T-cell (primary cell): ENCODE measurements at regions of chr15 and their contacts with region 1.

Region 1: GRCh38 chr15:34209421-34210282 is at the start of gene KATNBL1:
- DNase-seq: peak; percentile 83 to 97 (median 93)
- ATAC-seq: peak; percentile 92 to 97 (median 95)
- H3K4me3 ChIP-seq: peak within 1 kb of the TSS; percentile 63 to 68
- H3K4me3 Mint-ChIP-seq: peak within 1 kb of the TSS; percentile 81 to 90 (median 88)
- H3K27ac ChIP-seq: peak within 1 kb of the TSS; percentile 25
- H3K27ac Mint-ChIP-seq: peak within 1 kb of the TSS; percentile 61 to 79
- H3K4me1 ChIP-seq: peaks cover 3 to 8% of the 10 kb centered on the region in 2 experiments
- H3K4me1 Mint-ChIP-seq: peaks cover 21 to 26% (median 22%) of the 10 kb centered on the region in 3 donors
- H3K27me3 ChIP-seq: no peaks in the 10 kb centered on the region
- H3K27me3 Mint-ChIP-seq: no peaks in the 10 kb centered on the region
- total RNA-seq, gene KATNBL1: 27.1 to 37.3 (median 29.5) TPM

Region 2: GRCh38 chr15:34101366-34102175 is 108.1 kb before region 1 on chr15 and contains the starts of genes EMC7 and PGBD4:
- CTCF ChIA-PET with region 1: interaction called, 5 to 16 read pairs
- POLR2A ChIA-PET with region 1: interaction called in 1 of 2 experiments, 3 read pairs
- DNase-seq: peak; percentile 98 to 100 (median 99)
- ATAC-seq: peak; percentile 98 to 99 (median 99)
- H3K4me3 ChIP-seq: peak within 1 kb of the TSS; percentile 89 to 98
- H3K4me3 Mint-ChIP-seq: peak within 1 kb of the TSS; percentile 99
- H3K27ac ChIP-seq: peak within 1 kb of the TSS; percentile 93
- H3K27ac Mint-ChIP-seq: peak within 1 kb of the TSS; percentile 94 to 98
- H3K4me1 ChIP-seq: peaks cover 19 to 20% of the 10 kb centered on the region in 2 experiments
- H3K4me1 Mint-ChIP-seq: peaks cover 41 to 45% (median 42%) of the 10 kb centered on the region in 3 donors
- H3K27me3 ChIP-seq: no peaks in the 10 kb centered on the region
- H3K27me3 Mint-ChIP-seq: no peaks in the 10 kb centered on the region
- total RNA-seq, gene EMC7: 29.4 to 40.2 (median 33.0) TPM
- total RNA-seq, gene PGBD4: 3.1 to 4.0 (median 3.7) TPM

Region 3: DNA sequence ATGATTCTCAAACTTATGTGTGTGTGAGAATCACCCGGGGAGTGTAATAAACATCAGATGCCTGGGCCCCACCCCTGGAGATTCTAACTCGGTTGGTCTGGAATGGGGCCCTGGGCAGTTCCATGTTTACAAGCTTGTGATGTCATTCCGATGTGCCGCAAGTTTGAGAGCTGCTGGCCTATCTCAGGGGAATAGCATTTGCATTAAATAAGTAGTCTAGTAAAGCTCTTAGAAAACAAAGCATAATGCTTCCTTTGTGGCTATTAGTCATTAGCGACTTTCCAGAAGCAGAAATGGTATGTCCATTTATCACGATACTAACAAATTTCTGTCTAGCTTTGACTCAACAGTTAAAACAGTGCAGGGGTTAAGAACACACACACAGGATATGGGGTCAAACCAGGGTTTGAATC is 86.9 kb before region 1 on chr15:
- CTCF ChIA-PET with region 1: no interaction called
- POLR2A ChIA-PET with region 1: no interaction called
- DNase-seq: no peak
- ATAC-seq: no peak
- H3K4me3 ChIP-seq: no peak overlapping the region
- H3K4me3 Mint-ChIP-seq: no peak overlapping the region
- H3K27ac ChIP-seq: no peak overlapping the region
- H3K27ac Mint-ChIP-seq: no peak overlapping the region
- H3K4me1 ChIP-seq: no peaks in the 10 kb centered on the region
- H3K4me1 Mint-ChIP-seq: no peaks in the 10 kb centered on the region
- H3K27me3 ChIP-seq: peaks cover 0 to 10% of the 10 kb centered on the region in 2 experiments
- H3K27me3 Mint-ChIP-seq: peaks cover 12 to 32% of the 10 kb centered on the region in 2 donors